Dorsolateral prefrontal cortex (tissue), 120 donors: ENCODE measurements at regions of chr4 and their contacts with region 1.

Region 1: DNA sequence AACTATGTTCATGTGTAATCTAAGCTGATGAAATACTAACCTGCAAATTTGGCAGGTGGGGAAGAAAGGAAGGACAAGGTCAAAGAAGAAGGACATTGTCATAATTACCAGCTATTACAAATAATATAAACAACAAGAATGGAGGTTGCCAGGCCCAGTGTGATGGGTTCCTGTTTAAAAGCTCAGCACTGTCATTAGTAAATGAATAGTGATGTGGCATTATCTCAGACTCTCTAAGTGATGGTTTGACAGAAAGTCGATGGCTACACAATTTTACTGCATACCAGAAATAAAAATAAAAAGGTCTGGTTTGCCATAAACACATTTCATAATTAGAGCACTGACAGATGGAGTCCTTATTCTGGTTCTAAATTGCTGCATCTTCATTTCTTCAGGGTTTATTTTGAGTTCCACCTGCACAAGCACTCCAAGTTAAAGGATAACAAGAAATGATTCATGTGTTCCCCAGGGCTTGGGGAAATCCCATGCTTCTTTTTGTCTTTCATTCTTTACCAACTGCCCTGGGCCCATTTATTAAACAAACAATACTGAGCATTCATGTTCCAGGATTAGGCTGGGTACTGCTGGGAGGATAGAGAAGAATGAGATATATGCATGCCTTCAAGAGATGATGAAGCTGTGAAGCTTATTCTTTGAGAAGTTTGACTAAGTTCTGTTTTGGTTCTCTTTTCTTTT is 367.8 kb upstream of the RASGEF1B start:
- DNase-seq: no peak
- H3K4me3 ChIP-seq: no peak overlapping the region
- H3K27ac ChIP-seq: peak overlapping the region in 8 of 59 donors; percentile 7 to 80 (median 33)
- H3K27me3 ChIP-seq: no peaks in the 10 kb centered on the region
- CTCF ChIP-seq: no peak

Region 2: GRCh38 chr4:81531428-81531827 is 308.1 kb before region 1 on chr4:
- intact Hi-C with region 1: no loop called
- DNase-seq: no peak
- H3K4me3 ChIP-seq: no peak overlapping the region
- H3K27ac ChIP-seq: no peak overlapping the region
- H3K27me3 ChIP-seq: no peaks in the 10 kb centered on the region
- CTCF ChIP-seq: no peak

Region 3: DNA sequence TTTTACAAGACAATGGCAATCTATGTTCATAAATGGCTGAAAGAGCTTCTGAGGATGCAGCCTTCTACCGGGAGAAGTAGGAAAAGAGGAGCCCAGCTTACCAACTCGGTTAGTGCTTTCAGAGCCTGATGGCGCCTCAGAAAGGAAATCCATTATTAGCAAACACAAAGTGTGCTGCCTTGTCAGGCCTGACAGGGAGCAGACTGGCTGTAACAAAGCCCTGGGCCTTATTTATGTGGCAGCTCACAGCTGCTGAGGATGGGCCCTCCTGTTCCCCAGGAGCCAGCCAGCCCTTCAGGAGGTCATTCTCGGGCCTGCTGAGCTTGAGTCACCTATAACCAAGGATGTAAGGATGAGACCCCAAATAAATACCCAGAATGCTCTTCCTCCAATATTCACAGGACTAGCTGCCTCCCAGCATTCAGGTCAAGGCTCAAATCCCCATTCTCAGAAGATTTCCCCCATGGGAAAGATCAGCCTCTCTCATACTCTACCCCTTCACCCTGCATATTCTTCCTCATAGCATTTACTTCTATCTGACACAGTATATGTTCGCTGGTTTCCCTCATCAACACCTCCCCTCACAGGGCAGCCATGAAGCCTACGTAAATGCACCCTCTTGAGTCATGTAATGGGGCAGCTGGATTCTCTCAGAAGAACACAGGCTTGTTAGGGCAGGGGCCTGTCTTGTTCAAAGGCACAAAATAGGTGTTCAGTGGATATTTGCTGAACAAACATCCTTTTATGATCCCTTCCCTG is 140.8 kb before region 1 on chr4:
- intact Hi-C with region 1: loop called in 1 of 2 experiments (anchors 10 kb)
- DNase-seq: no peak
- H3K4me3 ChIP-seq: no peak overlapping the region
- H3K27ac ChIP-seq: no peak overlapping the region
- H3K27me3 ChIP-seq: no peaks in the 10 kb centered on the region
- CTCF ChIP-seq: no peak